CD8-positive, alpha-beta T cell (primary cell): ENCODE measurements at regions of chr18 and their contacts with region 1.

Region 1: DNA sequence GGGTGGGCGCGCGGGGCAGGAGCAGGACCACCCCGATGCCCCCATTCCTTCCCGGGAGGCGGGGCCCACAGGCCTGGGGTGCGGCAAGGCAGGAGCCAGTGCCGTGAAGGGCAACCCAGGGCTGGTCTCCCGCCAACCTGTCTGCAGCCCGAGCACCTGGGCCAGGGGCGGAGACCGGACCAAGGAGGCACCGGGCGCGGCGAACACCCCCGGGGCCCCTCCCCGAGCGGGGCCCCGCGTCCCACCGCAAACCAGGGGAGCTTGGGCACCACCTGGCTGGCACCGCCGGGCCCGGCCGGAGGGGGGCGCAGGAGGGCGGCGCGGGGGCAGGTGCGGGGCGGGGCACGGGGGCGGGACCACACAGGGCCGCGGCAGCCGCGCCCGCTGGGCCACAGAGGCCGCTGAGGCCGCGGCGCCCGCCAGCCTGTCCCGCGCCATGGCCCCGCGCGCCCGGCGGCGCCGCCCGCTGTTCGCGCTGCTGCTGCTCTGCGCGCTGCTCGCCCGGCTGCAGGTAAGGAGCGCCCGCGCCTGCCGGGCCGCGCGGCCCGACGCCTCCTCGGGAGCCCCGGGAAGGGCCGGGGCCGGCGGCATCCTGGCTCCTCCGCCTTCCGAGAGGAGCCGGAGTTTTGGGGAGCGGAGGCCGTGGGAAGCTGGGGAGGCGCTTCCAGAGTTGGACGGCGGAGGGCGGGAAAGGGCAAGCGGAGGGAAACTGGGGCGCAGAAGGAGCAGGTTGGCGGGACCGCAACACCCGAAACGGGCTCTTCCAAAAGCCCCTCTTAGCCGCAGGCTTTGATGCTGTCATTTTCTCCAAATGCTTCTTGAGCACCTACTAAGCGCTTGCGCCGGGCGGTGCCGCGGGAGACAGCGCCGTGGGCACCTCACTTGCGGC is at the start of gene TNFRSF11A:
- DNase-seq: peak; percentile 35 to 69 (median 61)
- ATAC-seq: peak; percentile 90
- H3K4me3 ChIP-seq: peak within 1 kb of the TSS; percentile 45 to 51
- H3K4me3 Mint-ChIP-seq: peak within 1 kb of the TSS; percentile 80
- H3K27ac ChIP-seq: no peak within 1 kb of the TSS
- H3K27ac Mint-ChIP-seq: no peak within 1 kb of the TSS
- H3K4me1 ChIP-seq: peaks cover 24% of the 10 kb centered on the region
- H3K4me1 Mint-ChIP-seq: peaks cover 26% of the 10 kb centered on the region
- H3K27me3 ChIP-seq: peaks cover 25 to 27% of the 10 kb centered on the region in 2 experiments
- H3K27me3 Mint-ChIP-seq: peaks cover 71% of the 10 kb centered on the region
- CTCF ChIP-seq: peak; percentile 25
- total RNA-seq, gene TNFRSF11A: 0.03 to 0.28 TPM

Region 2: DNA sequence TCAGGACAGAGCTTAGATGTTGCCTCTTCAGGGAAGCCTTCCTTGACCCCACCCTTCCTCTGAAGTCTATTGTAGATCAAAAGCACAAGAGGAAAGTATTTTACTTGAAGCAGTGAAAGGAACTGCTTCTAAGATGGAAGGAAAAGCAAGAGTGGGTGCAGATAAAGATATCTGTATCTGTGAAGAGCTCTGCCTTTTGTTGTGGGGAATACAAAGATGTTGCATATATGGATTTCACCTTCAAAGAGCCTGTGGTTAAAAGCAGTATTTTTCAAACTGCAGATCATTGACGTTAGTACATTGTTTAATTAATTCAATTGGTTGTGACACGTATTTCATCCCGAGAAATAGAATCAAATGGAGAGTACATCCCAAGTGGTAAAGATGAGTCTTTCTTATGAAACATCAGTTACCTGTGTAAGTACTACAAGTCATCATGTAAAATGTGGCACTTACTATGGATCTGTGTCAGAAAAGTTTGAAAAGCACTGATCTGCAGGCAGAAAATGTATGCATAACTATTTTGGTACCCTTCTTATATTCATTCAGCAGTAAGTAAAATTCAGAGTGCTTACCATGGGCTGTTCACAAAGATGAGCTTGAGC is 24.7 kb before region 1 on chr18:
- CTCF ChIA-PET with region 1: interaction called, 3 read pairs
- POLR2A ChIA-PET with region 1: no interaction called
- intact Hi-C with region 1: loop called in 1 of 2 experiments (anchors 1 kb)
- DNase-seq: peak in 1 of 9 experiments; percentile 3
- ATAC-seq: no peak
- H3K4me3 ChIP-seq: no peak overlapping the region
- H3K4me3 Mint-ChIP-seq: no peak overlapping the region
- H3K27ac ChIP-seq: no peak overlapping the region
- H3K27ac Mint-ChIP-seq: peak overlapping the region; percentile 45
- H3K4me1 ChIP-seq: no peaks in the 10 kb centered on the region
- H3K4me1 Mint-ChIP-seq: peaks cover 14% of the 10 kb centered on the region
- H3K27me3 ChIP-seq: no peaks in the 10 kb centered on the region
- H3K27me3 Mint-ChIP-seq: no peaks in the 10 kb centered on the region
- CTCF ChIP-seq: no peak